GM12878 (cell line): ENCODE measurements at regions of chr6 and their contacts with region 1.

Region 1: DNA sequence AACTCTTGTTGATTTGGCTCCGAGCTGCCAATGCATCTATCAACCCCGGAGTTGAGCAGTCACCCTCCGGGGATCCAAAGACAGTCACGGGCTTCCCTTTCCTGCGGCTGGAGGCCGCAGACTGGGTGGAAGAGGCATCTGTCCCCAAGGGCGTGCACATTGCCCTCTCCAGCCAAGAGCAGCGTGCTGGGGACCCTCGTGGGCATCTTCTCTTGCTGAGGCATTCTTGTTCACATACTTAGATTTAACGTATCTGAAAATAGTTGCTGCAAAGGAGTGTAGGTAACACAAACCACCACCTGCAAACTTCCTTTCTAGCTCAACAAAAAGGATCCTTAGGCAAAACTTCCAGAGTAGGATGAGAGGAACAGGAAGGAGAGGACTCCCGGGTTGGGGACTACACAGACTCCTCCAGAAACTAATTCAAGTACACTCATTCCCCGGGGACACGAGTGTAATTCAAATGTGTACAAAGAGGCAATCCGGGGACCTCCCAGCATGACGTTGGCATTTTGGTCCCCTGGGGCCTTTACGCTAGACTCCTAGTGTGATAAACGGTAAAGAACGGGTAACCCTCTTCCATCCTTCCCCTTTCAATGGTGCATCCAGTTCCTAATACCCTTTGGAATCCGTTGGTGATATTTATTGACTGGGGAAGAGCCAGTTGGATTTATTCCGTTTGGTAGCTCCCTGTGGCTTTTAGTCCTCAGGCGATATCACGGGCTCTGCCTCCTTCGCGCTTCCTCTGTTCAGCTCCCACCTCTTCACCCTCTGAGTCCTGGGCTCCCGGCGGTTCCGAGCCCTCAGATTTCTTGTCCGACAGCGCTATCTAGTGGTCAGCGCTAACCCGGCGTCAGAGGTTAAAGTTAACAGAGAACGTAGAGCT is 2.7 kb upstream of the COL12A1 start:
- DNase-seq: peak; percentile 23
- ATAC-seq: peak; percentile 86
- H3K4me3 ChIP-seq: no peak overlapping the region
- H3K27ac ChIP-seq: no peak overlapping the region
- H3K4me1 ChIP-seq: no peaks in the 10 kb centered on the region
- H3K27me3 ChIP-seq: peaks cover 29% of the 10 kb centered on the region in 2 experiments
- CTCF ChIP-seq: peak; percentile 82 to 96 (median 92)
- EP300 ChIP-seq: no peak
- POLR2A ChIP-seq: no peak
- RAD21 ChIP-seq: peak; percentile 96

Region 2: DNA sequence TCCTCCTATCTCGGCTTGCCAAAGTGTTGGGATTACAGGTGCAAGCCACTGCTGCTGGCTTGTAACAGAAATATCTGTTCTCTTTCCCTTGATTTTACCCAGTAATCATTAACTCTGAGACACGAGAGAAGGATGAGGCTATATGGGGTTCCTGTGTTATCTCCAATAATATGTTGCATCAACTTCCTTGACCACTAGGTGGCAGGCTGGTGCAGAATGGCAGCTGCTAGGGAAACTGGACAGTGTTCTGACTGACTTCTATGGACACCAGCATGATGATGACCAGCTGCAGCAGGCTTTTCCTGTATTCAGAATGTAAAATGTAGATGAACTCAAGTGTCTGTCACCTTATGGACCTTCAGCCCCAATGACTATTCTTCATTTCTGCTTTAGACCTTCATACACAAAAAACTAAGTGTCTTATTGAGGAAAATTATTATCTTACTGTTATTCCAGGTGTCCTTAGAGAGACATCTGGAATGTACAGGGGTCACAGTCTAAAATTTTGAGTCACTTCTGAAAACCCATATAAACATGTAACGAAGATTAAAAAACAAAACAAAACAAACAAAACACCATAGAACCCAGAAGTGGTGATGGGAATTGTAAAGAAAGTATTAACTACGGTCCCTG is 1533.0 kb before region 1 on chr6:
- CTCF ChIA-PET with region 1: interaction called, 10 read pairs
- POLR2A ChIA-PET with region 1: no interaction called
- RAD21 ChIA-PET with region 1: no interaction called
- SMC1A ChIA-PET with region 1: no interaction called
- in situ Hi-C with region 1: loop called (anchors 10 kb)
- intact Hi-C with region 1: loop called (anchors 5 kb)
- DNase-seq: no peak
- ATAC-seq: peak; percentile 98
- H3K4me3 ChIP-seq: no peak overlapping the region
- H3K27ac ChIP-seq: no peak overlapping the region
- H3K4me1 ChIP-seq: no peaks in the 10 kb centered on the region
- H3K27me3 ChIP-seq: no peaks in the 10 kb centered on the region
- CTCF ChIP-seq: peak; percentile 86 to 94 (median 90)
- EP300 ChIP-seq: no peak
- POLR2A ChIP-seq: no peak
- RAD21 ChIP-seq: peak; percentile 92

Region 3: GRCh38 chr6:73854998-73855718 is 1353.4 kb before region 1 on chr6:
- CTCF ChIA-PET with region 1: interaction called, 54 read pairs
- POLR2A ChIA-PET with region 1: no interaction called
- RAD21 ChIA-PET with region 1: interaction called, 22 read pairs
- SMC1A ChIA-PET with region 1: interaction called, 15 read pairs
- in situ Hi-C with region 1: loop called (anchors 10 kb)
- intact Hi-C with region 1: loop called (anchors 1 kb)
- DNase-seq: no peak
- ATAC-seq: peak; percentile 71
- H3K4me3 ChIP-seq: no peak overlapping the region
- H3K27ac ChIP-seq: no peak overlapping the region
- H3K4me1 ChIP-seq: no peaks in the 10 kb centered on the region
- H3K27me3 ChIP-seq: no peaks in the 10 kb centered on the region
- CTCF ChIP-seq: peak; percentile 52 to 62 (median 59); a peak in 5 of 6 replicates
- EP300 ChIP-seq: no peak
- POLR2A ChIP-seq: no peak
- RAD21 ChIP-seq: peak; percentile 66

Region 4: GRCh38 chr6:74343804-74344203 is 864.7 kb before region 1 on chr6:
- CTCF ChIA-PET with region 1: interaction called, 28 read pairs
- POLR2A ChIA-PET with region 1: no interaction called
- RAD21 ChIA-PET with region 1: interaction called, 11 read pairs
- SMC1A ChIA-PET with region 1: interaction called, 6 read pairs
- in situ Hi-C with region 1: no loop called
- intact Hi-C with region 1: loop called (anchors 5 kb)
- DNase-seq: no peak
- ATAC-seq: peak; percentile 46; the same call in 2 of the 3 replicates
- H3K4me3 ChIP-seq: no peak overlapping the region
- H3K27ac ChIP-seq: no peak overlapping the region
- H3K4me1 ChIP-seq: no peaks in the 10 kb centered on the region
- H3K27me3 ChIP-seq: no peaks in the 10 kb centered on the region
- CTCF ChIP-seq: peak in 2 of 3 experiments; percentile 18 to 19; a peak in 1 of 6 replicates
- EP300 ChIP-seq: no peak
- POLR2A ChIP-seq: no peak
- RAD21 ChIP-seq: no peak

Region 5: DNA sequence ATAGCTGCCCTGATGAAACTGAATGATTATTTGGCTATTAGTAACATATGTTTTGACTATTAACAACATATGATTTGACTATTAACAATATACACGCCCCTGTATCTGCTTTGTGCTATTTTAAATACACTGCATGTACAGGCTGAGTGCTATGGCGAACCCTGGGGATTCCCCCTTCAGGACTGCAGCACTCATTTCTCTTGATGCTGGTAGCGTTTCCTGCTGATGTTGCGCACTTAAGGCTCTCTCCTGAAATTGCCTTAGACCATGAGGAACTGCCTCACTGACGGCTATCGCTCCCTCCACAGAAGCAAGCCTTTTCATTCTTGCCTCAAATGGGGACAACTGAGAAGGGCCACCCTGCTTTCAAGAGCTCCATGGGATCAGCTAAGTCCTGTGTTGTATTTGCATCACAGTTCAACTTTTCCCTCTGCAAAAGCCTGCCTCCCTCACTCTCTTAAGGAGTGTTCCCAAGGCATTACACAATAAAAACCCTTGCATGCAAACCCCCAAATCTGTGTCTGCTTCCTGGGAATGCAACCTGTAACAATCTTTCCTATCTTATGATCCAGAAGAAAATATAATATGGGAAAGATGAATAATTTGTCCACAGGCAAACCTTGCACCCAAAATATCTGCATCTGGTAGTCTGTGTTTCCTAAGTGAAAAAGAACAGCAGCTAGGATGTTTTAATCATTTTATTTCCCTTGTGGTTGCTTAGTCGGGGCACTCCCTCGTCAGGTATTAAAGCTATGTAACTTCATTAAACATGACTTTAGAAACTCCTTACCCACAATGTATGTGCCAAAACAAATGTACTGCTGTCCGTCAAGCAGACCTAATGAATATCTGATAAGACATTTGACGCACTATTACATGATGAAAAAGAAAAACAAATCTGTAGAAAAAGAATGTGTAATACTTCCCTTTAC is 459.1 kb before region 1 on chr6:
- CTCF ChIA-PET with region 1: no interaction called
- POLR2A ChIA-PET with region 1: no interaction called
- RAD21 ChIA-PET with region 1: no interaction called
- SMC1A ChIA-PET with region 1: interaction called, 3 read pairs
- in situ Hi-C with region 1: no loop called
- intact Hi-C with region 1: loop called (anchors 10 kb)
- DNase-seq: no peak
- ATAC-seq: peak; percentile 83
- H3K4me3 ChIP-seq: no peak overlapping the region
- H3K27ac ChIP-seq: no peak overlapping the region
- H3K4me1 ChIP-seq: no peaks in the 10 kb centered on the region
- H3K27me3 ChIP-seq: no peaks in the 10 kb centered on the region
- CTCF ChIP-seq: no peak
- EP300 ChIP-seq: no peak
- POLR2A ChIP-seq: no peak
- RAD21 ChIP-seq: no peak

Region 6: GRCh38 chr6:75230484-75231325 is 22.2 kb after region 1 on chr6:
- CTCF ChIA-PET with region 1: interaction called, 52 read pairs
- POLR2A ChIA-PET with region 1: no interaction called
- RAD21 ChIA-PET with region 1: no interaction called
- SMC1A ChIA-PET with region 1: interaction called, 12 read pairs
- in situ Hi-C with region 1: no loop called
- intact Hi-C with region 1: no loop called
- DNase-seq: no peak
- ATAC-seq: peak; percentile 46; the same call in 2 of the 3 replicates
- H3K4me3 ChIP-seq: no peak overlapping the region
- H3K27ac ChIP-seq: no peak overlapping the region
- H3K4me1 ChIP-seq: no peaks in the 10 kb centered on the region
- H3K27me3 ChIP-seq: no peaks in the 10 kb centered on the region
- CTCF ChIP-seq: peak; percentile 41 to 47 (median 45); a peak in 5 of 6 replicates
- EP300 ChIP-seq: no peak
- POLR2A ChIP-seq: no peak
- RAD21 ChIP-seq: peak; percentile 56; the same call in 1 of the 2 replicates